Activated T-helper 2 cell treated with anti-CD3 and anti-CD28 coated beads, Interferon-gamma antibody, Interleukin-2, Interleukin-4, amounts not matched to agents 10 μg/mL and 5 μg/mL and 100 μg/mL, durations not matched to agents 14 hours and 24 hours and 36 hours (primary cell): ENCODE measurements at regions of chr9 and their contacts with region 1.

Region 1: DNA sequence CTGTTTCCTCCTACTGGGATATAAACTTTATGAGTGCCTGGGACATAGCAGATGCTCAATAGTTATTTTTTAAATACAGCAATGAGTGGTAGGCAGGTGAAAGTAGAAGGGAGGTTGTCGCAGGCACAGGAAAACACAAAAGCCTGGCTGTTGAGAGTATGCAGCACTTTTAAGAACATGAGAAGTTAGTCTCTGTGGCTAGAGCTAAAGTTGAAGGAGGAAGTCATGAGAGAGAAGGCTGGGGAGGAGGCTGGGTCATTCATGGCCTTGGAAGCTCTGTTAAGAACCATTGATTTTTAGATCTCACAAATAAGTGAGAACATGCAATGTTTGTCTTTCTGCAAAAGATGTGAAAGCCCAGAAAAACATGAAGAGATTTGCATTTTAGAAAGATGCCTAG is 126.7 kb downstream of the PRKACG start:
- DNase-seq: no peak
- H3K4me3 Mint-ChIP-seq: peak overlapping the region; percentile 17
- H3K27ac Mint-ChIP-seq: peak overlapping the region; percentile 62
- H3K4me1 Mint-ChIP-seq: peaks cover 35% of the 10 kb centered on the region
- H3K27me3 Mint-ChIP-seq: no peaks in the 10 kb centered on the region

Region 2: DNA sequence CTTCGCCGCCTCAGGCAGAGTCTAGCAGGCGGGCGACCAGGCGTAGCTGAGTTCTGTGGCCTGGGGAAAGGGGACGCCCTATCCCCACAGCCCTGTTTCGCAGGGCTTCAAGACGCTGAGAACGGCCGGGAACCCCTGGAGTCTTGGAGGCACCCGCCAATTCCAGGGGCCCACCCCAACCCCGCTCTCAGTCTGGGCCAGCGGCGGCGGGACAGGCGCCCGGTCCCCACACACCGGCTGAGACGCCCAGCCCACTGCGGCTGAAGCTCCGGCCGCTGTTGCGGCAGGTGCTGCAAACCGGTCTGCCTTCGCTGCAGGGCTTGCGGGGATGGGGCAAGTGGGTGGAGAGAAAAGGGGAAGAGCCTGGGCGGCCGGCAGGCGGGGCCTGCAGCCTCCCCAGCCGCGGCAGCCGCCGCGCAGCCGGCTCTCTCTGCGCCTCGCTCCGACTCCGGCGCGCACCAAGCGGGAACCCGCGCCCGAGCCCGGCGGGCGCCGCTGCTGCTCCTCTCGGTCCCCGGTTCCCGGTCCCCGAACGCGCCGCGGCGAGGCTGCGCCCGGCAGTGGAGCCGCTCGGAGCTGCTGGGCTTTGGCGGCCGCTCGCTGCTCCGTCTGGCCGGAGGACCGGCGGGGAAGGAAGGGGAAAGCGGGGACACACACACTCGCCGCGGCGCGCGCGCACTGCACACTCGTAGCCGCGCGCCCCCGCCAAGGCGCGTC is 182.3 kb before region 1 on chr9 and contains the start of gene PIP5K1B:
- intact Hi-C with region 1: loop called (anchors 5 kb)
- DNase-seq: peak; percentile 69
- H3K4me3 Mint-ChIP-seq: peak within 1 kb of the TSS; percentile 88
- H3K27ac Mint-ChIP-seq: peak within 1 kb of the TSS; percentile 67
- H3K4me1 Mint-ChIP-seq: peaks cover 54% of the 10 kb centered on the region
- H3K27me3 Mint-ChIP-seq: peaks cover 36% of the 10 kb centered on the region
- total RNA-seq, gene PIP5K1B: 76.2 and 77.2 TPM in 2 replicates